ENCODE measurements at regions of chr3 and their contacts with region 1.

Region 1: GRCh38 chr3:158570999-158571974 is at the start of gene MLF1:
- DNase-seq: peak; percentile 97 to 99 (median 98)
- ATAC-seq: peak; percentile 99
- H3K4me3 ChIP-seq: peak within 1 kb of the TSS; percentile 51 to 79 (median 68)
- H3K27ac ChIP-seq: peak within 1 kb of the TSS; percentile 70 to 92 (median 84)
- H3K4me1 ChIP-seq: peaks cover 0 to 31% (median 9%) of the 10 kb centered on the region in 12 donors
- H3K27me3 ChIP-seq: no peaks in the 10 kb centered on the region
- CTCF ChIP-seq: no peak
- POLR2A ChIP-seq: peak; percentile 77 to 94
- total RNA-seq, gene MLF1: 64.9 to 258 (median 123) TPM

Region 2: GRCh38 chr3:157475921-157476414 is 1095.3 kb before region 1 on chr3:
- intact Hi-C with region 1: no loop called
- DNase-seq: no peak
- ATAC-seq: no peak
- H3K4me3 ChIP-seq: no peak overlapping the region
- H3K27ac ChIP-seq: no peak overlapping the region
- H3K4me1 ChIP-seq: no peaks in the 10 kb centered on the region
- H3K27me3 ChIP-seq: no peaks in the 10 kb centered on the region
- CTCF ChIP-seq: no peak
- POLR2A ChIP-seq: no peak

Region 3: GRCh38 chr3:158430448-158430847 is 140.8 kb before region 1 on chr3:
- intact Hi-C with region 1: no loop called
- DNase-seq: no peak
- ATAC-seq: no peak
- H3K4me3 ChIP-seq: no peak overlapping the region
- H3K27ac ChIP-seq: no peak overlapping the region
- H3K4me1 ChIP-seq: no peaks in the 10 kb centered on the region
- H3K27me3 ChIP-seq: no peaks in the 10 kb centered on the region
- CTCF ChIP-seq: no peak
- POLR2A ChIP-seq: no peak

Region 4: GRCh38 chr3:158644345-158644908 is 73.1 kb after region 1 on chr3 and contains the start of gene GFM1:
- intact Hi-C with region 1: loop called in 6 of 10 experiments (anchors 5 to 10 kb)
- DNase-seq: peak; percentile 93 to 96 (median 94)
- ATAC-seq: peak; percentile 93 to 99 (median 98)
- H3K4me3 ChIP-seq: peak within 1 kb of the TSS; percentile 56 to 96 (median 80)
- H3K27ac ChIP-seq: peak within 1 kb of the TSS; percentile 67 to 96 (median 89)
- H3K4me1 ChIP-seq: peaks cover 6 to 35% (median 21%) of the 10 kb centered on the region in 12 donors
- H3K27me3 ChIP-seq: no peaks in the 10 kb centered on the region
- CTCF ChIP-seq: peak; percentile 60 to 98 (median 91)
- POLR2A ChIP-seq: peak in 1 of 2 donors; percentile 45
- total RNA-seq, gene GFM1: 49.0 to 77.7 (median 50.9) TPM

Region 5: DNA sequence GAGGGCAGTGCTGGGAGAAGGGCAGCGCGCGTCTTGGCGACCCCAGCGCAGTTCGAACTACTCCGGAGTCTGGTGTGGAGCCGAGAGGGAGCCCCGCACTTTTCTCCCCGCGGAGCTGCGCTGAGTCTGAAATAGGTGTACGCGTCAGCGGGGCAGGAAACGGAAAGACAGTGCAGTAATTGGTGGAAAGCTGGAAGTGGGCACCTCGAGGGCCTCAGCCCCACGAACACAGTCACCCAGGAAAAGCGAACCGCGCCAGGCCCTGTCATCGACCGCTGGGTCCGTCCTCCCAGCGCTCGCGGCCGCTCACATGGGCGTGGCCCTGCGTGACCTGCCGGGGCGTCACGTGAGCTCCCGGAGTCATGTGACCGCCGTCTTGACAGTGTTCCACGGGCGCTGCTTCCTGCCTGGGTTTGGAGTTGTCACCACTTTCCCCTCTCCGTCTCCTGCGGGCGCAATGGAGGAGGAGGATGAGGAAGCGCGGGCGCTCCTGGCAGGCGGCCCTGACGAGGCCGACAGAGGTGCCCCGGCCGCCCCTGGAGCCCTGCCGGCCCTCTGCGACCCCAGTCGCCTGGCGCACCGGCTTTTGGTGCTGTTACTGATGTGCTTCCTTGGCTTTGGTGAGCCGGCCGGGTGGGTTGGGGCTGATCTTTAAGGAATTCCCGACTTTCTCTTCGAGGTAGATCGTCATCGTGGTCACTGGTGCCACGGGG is 230.6 kb after region 1 on chr3 and contains the start of gene MFSD1:
- intact Hi-C with region 1: loop called in 2 of 10 experiments (anchors 5 kb)
- DNase-seq: peak; percentile 95 to 98 (median 97)
- ATAC-seq: peak; percentile 96 to 99 (median 99)
- H3K4me3 ChIP-seq: peak within 1 kb of the TSS; percentile 71 to 95 (median 84)
- H3K27ac ChIP-seq: peak within 1 kb of the TSS; percentile 37 to 95 (median 84)
- H3K4me1 ChIP-seq: peaks cover 0 to 37% (median 14%) of the 10 kb centered on the region in 12 donors
- H3K27me3 ChIP-seq: no peaks in the 10 kb centered on the region
- CTCF ChIP-seq: no peak
- POLR2A ChIP-seq: peak in 1 of 2 donors; percentile 76
- total RNA-seq, gene MFSD1: 19.2 to 71.4 (median 35.7) TPM